ENCODE measurements at regions of chr15 and their contacts with region 1.

Region 1: DNA sequence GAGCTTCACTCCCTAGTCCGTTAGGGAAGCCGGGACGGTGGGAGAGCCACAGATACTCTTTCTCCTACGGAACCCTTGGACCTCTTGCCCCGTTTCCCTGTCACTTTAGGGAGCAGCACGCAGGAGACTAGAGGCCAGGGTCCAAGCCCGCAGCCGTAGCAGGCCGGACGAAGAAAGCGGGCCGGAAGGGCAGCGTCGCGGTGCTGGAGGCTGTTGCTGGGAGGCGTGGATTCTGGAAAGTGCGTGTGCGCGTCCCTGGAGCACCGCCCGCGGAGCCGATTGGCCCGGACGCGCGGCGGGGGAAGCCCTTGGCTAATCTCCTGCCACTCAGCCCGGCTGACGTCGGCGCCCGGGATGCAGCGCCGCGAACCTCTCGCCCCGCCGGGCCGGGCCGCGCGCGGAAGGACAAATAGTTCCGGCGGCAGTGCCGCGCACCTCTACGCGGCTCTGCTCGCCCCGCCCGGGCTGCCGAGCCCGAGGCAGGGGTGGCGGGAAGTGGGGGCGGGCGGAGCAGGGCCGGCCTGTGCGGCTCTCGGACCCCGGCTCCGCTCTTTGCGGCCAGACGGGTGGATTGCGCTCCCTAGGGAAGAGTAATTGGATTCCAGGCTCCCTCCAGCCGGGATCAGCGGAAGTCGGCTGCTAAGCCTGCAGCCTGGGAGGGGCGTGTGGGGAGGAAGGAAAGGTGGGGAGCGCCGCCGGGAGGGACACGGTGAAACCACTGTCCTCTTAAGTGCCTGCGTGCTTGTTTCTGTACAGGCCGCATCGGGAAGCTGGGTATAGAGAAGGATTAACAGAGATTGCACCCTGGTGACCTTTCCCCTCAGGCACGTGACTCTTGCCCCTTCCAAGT is 31.3 kb upstream of the TCF12 start:
- DNase-seq: peak; percentile 95
- H3K4me3 ChIP-seq: peak overlapping the region; percentile 60 to 78
- H3K27ac ChIP-seq: peak overlapping the region; percentile 94 to 95
- H3K4me1 ChIP-seq: peaks cover 12 to 13% of the 10 kb centered on the region in 2 experiments; a peak in 3 of 4 replicates
- H3K27me3 ChIP-seq: no peaks in the 10 kb centered on the region
- CTCF ChIP-seq: peak; percentile 23; the same call in 1 of the 2 replicates
- EP300 ChIP-seq: peak in 1 of 2 experiments; percentile 65; a peak in 2 of 4 replicates
- RAD21 ChIP-seq: no peak

Region 2: DNA sequence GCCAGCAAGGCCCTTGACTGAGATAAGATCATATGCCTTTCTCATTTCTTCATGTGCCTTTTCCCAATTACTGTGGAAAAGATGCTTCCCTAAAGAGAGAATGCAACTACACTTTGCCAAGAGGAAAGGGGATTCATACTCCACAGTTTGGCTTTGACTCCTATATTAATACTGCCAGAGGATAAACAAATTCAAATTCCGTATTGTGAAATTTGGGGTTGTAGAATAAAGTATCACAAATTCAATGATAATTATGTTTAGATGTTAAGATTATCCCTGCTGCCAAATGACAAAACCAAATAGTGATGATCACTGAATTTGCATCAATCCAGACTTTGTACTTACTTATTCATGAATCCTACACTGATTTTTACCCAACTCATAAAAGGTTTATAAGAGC is 333.7 kb before region 1 on chr15:
- CTCF ChIA-PET with region 1: no interaction called
- POLR2A ChIA-PET with region 1: no interaction called
- DNase-seq: no peak
- H3K4me3 ChIP-seq: no peak overlapping the region
- H3K27ac ChIP-seq: no peak overlapping the region
- H3K4me1 ChIP-seq: no peaks in the 10 kb centered on the region
- H3K27me3 ChIP-seq: no peaks in the 10 kb centered on the region
- CTCF ChIP-seq: no peak
- EP300 ChIP-seq: no peak
- RAD21 ChIP-seq: no peak

Region 3: DNA sequence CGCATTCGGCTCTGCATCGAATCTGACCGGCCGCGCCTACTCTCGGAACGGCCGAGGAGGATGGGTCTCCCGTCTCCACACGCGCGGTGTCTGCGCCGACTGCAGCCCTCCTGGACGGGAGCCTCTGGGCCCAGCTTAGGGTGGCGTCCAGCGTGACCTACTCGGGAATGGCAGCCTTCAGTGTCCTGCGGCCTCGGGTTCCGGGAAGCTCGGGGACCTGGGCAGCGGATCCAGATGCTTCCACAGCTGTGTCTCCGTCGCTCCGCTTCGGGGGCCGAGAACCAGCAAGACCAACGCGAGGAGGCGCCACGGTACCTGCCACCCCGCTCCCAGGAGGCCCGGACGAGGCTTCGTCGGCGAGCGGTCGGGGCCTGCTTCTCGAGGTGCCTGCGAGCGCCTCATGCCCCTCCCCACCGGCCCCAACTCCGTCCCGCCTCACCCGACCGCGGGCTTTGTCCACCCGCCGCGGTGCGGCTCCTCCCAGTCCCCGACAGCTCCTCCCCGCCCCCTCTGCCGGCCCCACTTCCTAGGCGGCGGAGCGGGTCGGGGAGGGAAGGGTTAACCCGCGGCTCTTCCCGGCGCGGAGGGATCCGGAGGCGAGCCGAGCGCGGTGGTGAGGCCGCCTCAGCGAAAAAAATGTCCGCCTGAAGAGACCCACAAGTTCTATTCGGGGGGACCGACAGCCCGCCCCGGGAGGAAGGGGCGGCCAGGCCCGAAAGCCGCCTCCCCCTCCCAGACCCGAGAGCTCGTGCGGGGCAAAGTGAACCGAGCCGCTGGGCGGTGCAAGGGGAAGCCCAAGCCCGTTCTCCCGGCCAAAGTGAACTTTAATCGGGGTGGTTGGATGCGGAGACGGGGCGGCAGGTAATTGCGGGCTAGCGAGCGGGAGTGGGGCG is 31.1 kb after region 1 on chr15 and contains the start of gene TCF12:
- CTCF ChIA-PET with region 1: interaction called, 4 read pairs
- POLR2A ChIA-PET with region 1: interaction called, 40 read pairs
- DNase-seq: peak; percentile 98
- H3K4me3 ChIP-seq: peak within 1 kb of the TSS; percentile 90 to 94
- H3K27ac ChIP-seq: peak within 1 kb of the TSS; percentile 87 to 95
- H3K4me1 ChIP-seq: peaks cover 8 to 12% of the 10 kb centered on the region in 2 experiments; a peak in 3 of 4 replicates
- H3K27me3 ChIP-seq: no peaks in the 10 kb centered on the region
- CTCF ChIP-seq: peak; percentile 44
- EP300 ChIP-seq: peak; percentile 45 to 65; a peak in 3 of 4 replicates
- RAD21 ChIP-seq: peak; percentile 36
- polyA plus RNA-seq, gene TCF12: 49.6 and 50.6 TPM in 2 replicates